ENCODE measurements at regions of chr6 and their contacts with region 1.

Region 1: DNA sequence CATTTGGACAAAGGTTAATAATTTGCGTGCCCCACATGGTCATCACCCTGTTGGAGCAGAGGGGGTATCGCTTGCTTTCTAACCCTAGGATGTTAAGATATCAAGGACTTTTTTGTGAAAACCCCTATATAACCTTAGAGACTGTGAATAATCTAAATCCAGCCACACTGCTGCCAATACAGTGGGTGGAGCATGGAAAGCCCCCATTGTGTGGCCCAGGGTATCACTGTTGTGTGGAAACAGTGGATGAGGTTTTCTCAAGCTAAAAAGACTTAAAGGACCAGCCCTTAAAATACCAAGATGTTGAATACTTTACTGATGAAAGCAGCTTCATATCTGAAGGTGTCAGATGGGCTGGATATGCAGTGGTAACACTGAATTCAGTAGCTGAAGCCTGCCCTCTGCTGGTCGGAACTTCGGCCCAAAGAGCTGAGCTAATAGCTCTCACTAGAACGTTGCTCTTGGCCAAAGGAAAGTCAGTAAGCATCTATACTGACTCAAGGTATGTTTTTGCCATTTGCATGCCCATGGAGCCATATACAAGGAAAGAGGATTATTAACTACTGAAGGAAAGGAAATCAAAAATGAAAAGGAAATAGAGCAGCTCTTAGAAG is 695.2 kb downstream of the PHF3 start:
- DNase-seq: peak; percentile 80
- H3K4me3 Mint-ChIP-seq: no peak overlapping the region
- H3K27ac Mint-ChIP-seq: no peak overlapping the region
- H3K4me1 Mint-ChIP-seq: no peaks in the 10 kb centered on the region
- H3K27me3 Mint-ChIP-seq: no peaks in the 10 kb centered on the region
- CTCF ChIP-seq: peak; percentile 52

Region 2: GRCh38 chr6:63705707-63706106 is 625.1 kb before region 1 on chr6:
- CTCF ChIA-PET with region 1: no interaction called
- intact Hi-C with region 1: loop called (anchors 5 kb)
- DNase-seq: no peak
- H3K4me3 Mint-ChIP-seq: no peak overlapping the region
- H3K27ac Mint-ChIP-seq: no peak overlapping the region
- H3K4me1 Mint-ChIP-seq: no peaks in the 10 kb centered on the region
- H3K27me3 Mint-ChIP-seq: no peaks in the 10 kb centered on the region
- CTCF ChIP-seq: no peak

Region 3: GRCh38 chr6:63923139-63923739 is 407.6 kb before region 1 on chr6:
- CTCF ChIA-PET with region 1: interaction called, 3 read pairs
- intact Hi-C with region 1: loop called (anchors 1 kb)
- DNase-seq: no peak
- H3K4me3 Mint-ChIP-seq: no peak overlapping the region
- H3K27ac Mint-ChIP-seq: no peak overlapping the region
- H3K4me1 Mint-ChIP-seq: no peaks in the 10 kb centered on the region
- H3K27me3 Mint-ChIP-seq: peaks cover 36% of the 10 kb centered on the region
- CTCF ChIP-seq: peak; percentile 42

Region 4: GRCh38 chr6:64012351-64013001 is 318.3 kb before region 1 on chr6:
- CTCF ChIA-PET with region 1: interaction called, 31 read pairs
- intact Hi-C with region 1: loop called (anchors 1 kb)
- DNase-seq: peak; percentile 44
- H3K4me3 Mint-ChIP-seq: no peak overlapping the region
- H3K27ac Mint-ChIP-seq: no peak overlapping the region
- H3K4me1 Mint-ChIP-seq: no peaks in the 10 kb centered on the region
- H3K27me3 Mint-ChIP-seq: peaks cover 15% of the 10 kb centered on the region
- CTCF ChIP-seq: peak; percentile 54

Region 5: GRCh38 chr6:64280569-64280968 is 50.2 kb before region 1 on chr6:
- CTCF ChIA-PET with region 1: interaction called, 6 read pairs
- intact Hi-C with region 1: loop called (anchors 5 kb)
- DNase-seq: peak; percentile 32
- H3K4me3 Mint-ChIP-seq: no peak overlapping the region
- H3K27ac Mint-ChIP-seq: no peak overlapping the region
- H3K4me1 Mint-ChIP-seq: no peaks in the 10 kb centered on the region
- H3K27me3 Mint-ChIP-seq: peaks cover 11% of the 10 kb centered on the region
- CTCF ChIP-seq: peak; percentile 21

Region 6: GRCh38 chr6:64357430-64357829 is 26.6 kb after region 1 on chr6:
- CTCF ChIA-PET with region 1: no interaction called
- intact Hi-C with region 1: no loop called
- DNase-seq: no peak
- H3K4me3 Mint-ChIP-seq: no peak overlapping the region
- H3K27ac Mint-ChIP-seq: no peak overlapping the region
- H3K4me1 Mint-ChIP-seq: no peaks in the 10 kb centered on the region
- H3K27me3 Mint-ChIP-seq: no peaks in the 10 kb centered on the region
- CTCF ChIP-seq: no peak